GM18951 (cell line): ENCODE measurements at regions of chr11 and their contacts with region 1.

Region 1: DNA sequence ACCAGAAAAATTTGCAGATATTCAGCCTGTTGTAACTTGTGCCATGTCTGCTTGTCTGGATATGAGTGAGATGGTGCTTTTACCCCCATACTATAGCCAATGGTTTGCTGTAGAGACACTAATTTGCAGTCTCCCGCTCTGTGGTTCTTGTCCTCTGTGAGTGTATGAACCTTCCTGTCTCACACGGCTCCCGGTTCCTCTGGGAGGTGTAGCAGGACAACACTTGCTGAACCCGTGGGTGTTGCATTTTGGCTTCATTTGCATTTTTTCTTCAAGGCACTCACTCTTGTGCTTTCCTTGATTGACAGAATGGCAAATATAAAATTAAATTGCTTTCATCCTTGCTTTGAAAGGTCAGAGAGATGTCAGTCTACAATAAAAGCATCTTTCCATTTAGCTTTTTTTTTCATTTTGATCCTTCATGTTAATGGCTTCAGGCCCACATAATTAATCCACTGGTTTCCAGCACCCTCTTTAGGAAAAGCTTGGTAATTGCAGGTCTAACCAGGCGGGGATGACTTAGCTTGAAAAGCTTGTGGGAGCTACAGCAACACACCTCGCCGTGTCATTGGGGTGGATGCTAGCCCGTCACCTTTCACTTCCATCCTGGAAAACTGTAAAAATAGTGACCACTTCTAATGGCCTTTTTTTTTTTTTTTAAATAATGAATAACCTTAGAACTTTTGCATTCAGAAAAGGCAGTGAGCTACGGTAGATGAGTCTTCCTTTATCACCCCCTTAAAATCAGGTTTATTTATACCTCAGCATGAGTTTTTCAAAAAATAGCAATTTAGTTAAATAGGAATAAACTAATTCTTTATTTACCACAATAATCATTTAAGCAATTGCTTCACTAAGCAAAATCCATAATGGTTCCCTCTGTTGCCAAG is 27.4 kb upstream of the ST14 start:
- POLR2A ChIP-seq: no peak

Region 2: GRCh38 chr11:129922674-129923073 is 209.5 kb before region 1 on chr11:
- in situ Hi-C with region 1: loop called (anchors 5 kb)
- POLR2A ChIP-seq: no peak

Region 3: GRCh38 chr11:130094614-130095013 is 37.6 kb before region 1 on chr11:
- in situ Hi-C with region 1: no loop called
- POLR2A ChIP-seq: no peak